ENCODE measurements at regions of chr14 and their contacts with region 1.

Region 1: DNA sequence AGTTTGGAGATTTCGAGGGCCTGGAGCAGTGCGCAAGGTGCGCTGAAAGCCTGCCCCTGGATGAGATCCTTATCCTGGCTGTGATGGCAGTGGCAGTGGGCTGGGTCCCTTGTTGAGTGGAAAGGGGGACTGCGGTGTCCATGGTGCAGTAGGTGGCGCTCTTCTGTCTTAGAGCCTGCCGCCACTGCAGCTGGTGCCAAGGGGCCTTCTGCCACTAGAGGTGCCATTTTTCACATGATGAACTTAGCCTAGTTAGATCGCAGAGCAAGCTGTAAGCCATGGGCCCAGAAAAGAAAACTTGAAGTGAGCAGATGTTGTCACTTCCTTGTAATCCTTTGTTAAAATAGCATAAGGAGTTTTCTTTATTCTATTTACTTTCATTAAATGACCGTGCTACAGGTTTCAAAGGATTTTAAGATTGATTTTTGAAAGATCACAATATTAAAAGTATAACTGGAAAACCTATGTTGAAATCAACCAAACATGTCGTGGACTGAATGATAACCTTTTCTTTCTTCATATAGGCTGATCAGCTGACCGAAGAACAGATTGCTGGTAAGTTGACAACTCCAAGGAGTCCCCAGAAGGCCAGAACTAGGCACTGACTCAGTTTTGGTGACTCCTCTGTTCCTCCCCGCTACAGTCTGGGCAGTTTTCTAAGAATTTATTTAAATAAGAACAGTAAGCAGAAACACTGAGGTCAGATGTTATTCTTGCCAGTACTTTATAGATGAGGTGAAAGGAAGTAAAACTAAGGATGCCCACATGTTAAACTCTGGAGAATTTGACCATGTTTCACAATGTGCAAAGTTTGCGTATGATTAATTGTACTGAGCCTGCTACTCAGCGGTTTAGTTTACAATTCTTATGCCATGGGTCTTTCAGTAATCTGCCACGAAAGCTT is 3.0 kb downstream of the CALM1 start:
- DNase-seq: peak; percentile 94
- H3K4me3 ChIP-seq: no peak overlapping the region
- H3K27ac ChIP-seq: peak overlapping the region; percentile 23 to 76 (median 75)
- H3K4me1 ChIP-seq: peaks cover 17 to 20% of the 10 kb centered on the region in 2 donors
- H3K27me3 ChIP-seq: no peaks in the 10 kb centered on the region
- CTCF ChIP-seq: peak; percentile 98 to 100 (median 99)
- POLR2A ChIP-seq: no peak

Region 2: GRCh38 chr14:90518941-90519256 is 119.1 kb after region 1 on chr14:
- intact Hi-C with region 1: loop called (anchors 10 kb)
- DNase-seq: peak; percentile 31 to 48
- H3K4me3 ChIP-seq: no peak overlapping the region
- H3K27ac ChIP-seq: no peak overlapping the region
- H3K4me1 ChIP-seq: peaks cover 37 to 60% of the 10 kb centered on the region in 2 donors
- H3K27me3 ChIP-seq: no peaks in the 10 kb centered on the region
- CTCF ChIP-seq: peak in 4 of 6 experiments; percentile 29 to 52 (median 42)
- POLR2A ChIP-seq: no peak

Region 3: DNA sequence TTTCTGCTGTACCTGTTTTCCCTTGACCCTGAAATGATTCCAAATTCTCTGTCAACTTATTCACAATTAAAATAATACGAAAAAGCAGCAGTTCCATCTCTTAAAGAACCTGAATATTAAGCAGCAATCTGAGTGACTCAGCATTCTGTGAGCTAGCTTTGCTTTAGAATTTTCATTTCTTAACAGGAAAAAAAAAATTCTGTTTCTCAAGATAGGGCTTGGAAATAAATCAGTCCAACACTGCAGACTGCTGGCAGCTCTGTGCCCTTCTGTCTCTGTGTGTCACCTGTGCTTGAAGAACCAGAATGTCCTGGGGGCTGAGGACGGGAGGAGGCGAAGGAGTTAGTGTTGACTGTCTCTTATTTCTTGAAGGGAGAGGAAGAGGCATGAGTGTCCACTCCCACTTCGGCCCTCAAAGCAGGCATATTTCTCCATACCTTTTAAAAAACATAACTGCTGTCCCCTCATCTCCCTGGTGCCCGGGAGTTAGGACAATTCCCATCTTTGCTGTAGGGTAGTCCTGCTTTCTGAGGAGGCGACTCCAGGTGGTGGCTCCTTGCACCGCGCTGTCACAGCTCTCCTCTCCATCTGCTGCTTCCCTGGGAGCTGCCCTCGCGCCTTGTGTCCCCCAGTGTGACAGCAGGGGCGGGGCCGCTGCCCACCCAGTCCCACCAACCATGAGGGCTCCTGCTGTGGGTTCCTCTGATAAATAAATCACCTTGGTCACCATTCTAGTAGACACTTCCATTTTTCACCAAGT is 200.1 kb after region 1 on chr14:
- intact Hi-C with region 1: loop called (anchors 5 kb)
- DNase-seq: peak; percentile 74 to 75
- H3K4me3 ChIP-seq: no peak overlapping the region
- H3K27ac ChIP-seq: peak overlapping the region; percentile 22 to 47 (median 33)
- H3K4me1 ChIP-seq: peaks cover 6 to 10% of the 10 kb centered on the region in 2 donors
- H3K27me3 ChIP-seq: no peaks in the 10 kb centered on the region
- CTCF ChIP-seq: peak in 5 of 6 experiments; percentile 16 to 89 (median 60)
- POLR2A ChIP-seq: no peak

Region 4: GRCh38 chr14:90697577-90698206 is 297.9 kb after region 1 on chr14:
- intact Hi-C with region 1: loop called (anchors 2 kb)
- DNase-seq: peak; percentile 81 to 88
- H3K4me3 ChIP-seq: no peak overlapping the region
- H3K27ac ChIP-seq: peak overlapping the region in 1 of 3 donors; percentile 20
- H3K4me1 ChIP-seq: peaks cover 11 to 15% of the 10 kb centered on the region in 2 donors
- H3K27me3 ChIP-seq: no peaks in the 10 kb centered on the region
- CTCF ChIP-seq: peak; percentile 80 to 96 (median 92)
- POLR2A ChIP-seq: no peak

Region 5: DNA sequence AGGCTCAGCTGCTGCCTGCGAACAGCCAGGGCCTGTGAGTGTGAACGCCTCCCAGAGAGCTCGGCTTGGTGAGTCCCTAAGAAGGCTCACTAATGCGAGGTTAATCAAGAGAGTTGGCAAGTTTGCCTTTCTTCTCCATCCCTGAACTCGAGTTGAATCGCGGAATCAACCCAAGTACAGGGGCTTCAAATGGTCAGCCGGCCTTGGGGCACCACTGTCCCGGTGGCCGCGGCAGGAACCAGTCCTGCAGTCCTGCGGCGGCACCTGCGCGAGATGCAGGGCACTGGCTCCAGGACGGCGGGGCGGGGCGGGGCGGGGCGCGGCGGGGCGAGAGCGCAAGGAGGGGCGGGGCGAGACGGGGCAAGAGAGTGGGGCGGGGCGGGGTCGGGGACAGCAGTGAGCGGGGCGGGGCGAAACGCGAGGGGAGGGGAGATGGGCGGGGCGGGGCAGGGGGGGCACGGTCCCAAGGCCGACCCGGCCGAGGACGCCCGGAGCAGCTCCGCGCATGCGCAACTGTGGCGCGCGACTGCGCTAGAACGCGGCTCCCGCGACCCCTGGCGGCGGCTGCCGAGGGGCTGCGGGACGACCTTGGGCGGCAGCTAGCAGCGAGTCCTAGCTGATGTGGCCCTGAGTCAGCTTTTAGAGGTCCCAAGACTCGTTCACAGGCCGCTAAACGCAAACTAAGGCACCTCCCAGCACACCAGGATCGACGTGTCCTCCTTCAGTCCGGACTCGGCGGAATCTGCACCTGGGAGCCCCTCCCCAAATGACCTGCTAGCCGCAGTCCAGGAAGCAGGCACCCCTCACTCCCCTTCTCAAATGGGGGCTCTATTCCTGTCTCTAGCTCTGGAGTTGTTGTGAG is 358.5 kb after region 1 on chr14:
- intact Hi-C with region 1: loop called (anchors 5 kb)
- DNase-seq: peak; percentile 89 to 92
- H3K4me3 ChIP-seq: peak overlapping the region in 1 of 3 donors; percentile 52
- H3K27ac ChIP-seq: peak overlapping the region; percentile 73 to 93 (median 88)
- H3K4me1 ChIP-seq: peaks cover 5 to 15% of the 10 kb centered on the region in 2 donors
- H3K27me3 ChIP-seq: no peaks in the 10 kb centered on the region
- CTCF ChIP-seq: peak; percentile 61 to 95 (median 78)
- POLR2A ChIP-seq: peak in 1 of 2 donors; percentile 64

Region 6: GRCh38 chr14:91523972-91524371 is 1124.2 kb after region 1 on chr14:
- intact Hi-C with region 1: no loop called
- DNase-seq: no peak
- H3K4me3 ChIP-seq: no peak overlapping the region
- H3K27ac ChIP-seq: no peak overlapping the region
- H3K4me1 ChIP-seq: no peaks in the 10 kb centered on the region
- H3K27me3 ChIP-seq: no peaks in the 10 kb centered on the region
- CTCF ChIP-seq: no peak
- POLR2A ChIP-seq: no peak

Measured in thyroid gland (tissue), 4 donors.